GM12878 (cell line): ENCODE measurements at regions of chr12 and their contacts with region 1.

Region 1: GRCh38 chr12:102740141-102740955 is 176.7 kb downstream of the PAH start:
- DNase-seq: no peak
- ATAC-seq: peak; percentile 64
- H3K4me3 ChIP-seq: no peak overlapping the region
- H3K27ac ChIP-seq: no peak overlapping the region
- H3K4me1 ChIP-seq: peaks cover 1% of the 10 kb centered on the region
- H3K27me3 ChIP-seq: no peaks in the 10 kb centered on the region
- CTCF ChIP-seq: peak; percentile 17 to 64 (median 37); a peak in 3 of 6 replicates
- EP300 ChIP-seq: no peak
- POLR2A ChIP-seq: no peak
- RAD21 ChIP-seq: peak; percentile 74

Region 2: GRCh38 chr12:102119674-102120563 is 620.4 kb before region 1 on chr12 and contains the starts of genes NUP37 and PARPBP:
- CTCF ChIA-PET with region 1: interaction called, 10 read pairs
- POLR2A ChIA-PET with region 1: no interaction called
- RAD21 ChIA-PET with region 1: no interaction called
- SMC1A ChIA-PET with region 1: no interaction called
- in situ Hi-C with region 1: no loop called
- intact Hi-C with region 1: no loop called
- DNase-seq: peak; percentile 68
- ATAC-seq: peak; percentile 95
- H3K4me3 ChIP-seq: peak within 1 kb of the TSS; percentile 88
- H3K27ac ChIP-seq: peak within 1 kb of the TSS; percentile 86
- H3K4me1 ChIP-seq: no peaks in the 10 kb centered on the region
- H3K27me3 ChIP-seq: no peaks in the 10 kb centered on the region
- CTCF ChIP-seq: peak in 1 of 3 experiments; percentile 8; a peak in 1 of 6 replicates
- EP300 ChIP-seq: 0 out of 4 replicates have a peak, but pooled peaks of 1 of the 2 experiments have one; percentile 6
- POLR2A ChIP-seq: peak; percentile 95
- RAD21 ChIP-seq: no peak
- polyA plus RNA-seq, gene NUP37: 191 to 250 TPM
- polyA plus RNA-seq, gene PARPBP: 29.2 to 40.3 TPM

Region 3: DNA sequence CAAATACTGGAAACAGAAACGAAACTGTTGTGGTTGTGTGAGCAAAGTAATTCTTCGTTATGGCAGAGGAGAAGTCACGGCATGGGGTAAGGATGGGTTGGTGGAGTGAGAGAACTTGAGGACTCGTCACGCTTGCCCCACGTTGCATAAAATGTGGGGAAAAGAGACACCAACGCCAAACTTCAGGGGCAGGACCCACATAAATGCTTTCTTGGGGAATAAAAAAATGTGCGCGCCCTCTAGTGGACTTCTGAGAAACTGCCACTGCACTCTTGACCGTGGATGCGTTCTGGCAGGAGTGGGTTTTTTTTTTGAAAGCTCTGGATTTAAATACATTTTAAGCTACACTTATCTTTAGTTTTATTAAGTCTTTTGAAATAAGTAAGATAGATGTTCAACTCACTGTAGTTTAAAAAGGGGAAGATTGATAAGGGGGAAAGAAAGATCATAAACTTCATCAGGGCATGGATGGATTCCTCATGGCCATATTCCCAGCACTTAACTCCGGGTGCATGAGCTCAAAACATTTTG is 255.9 kb before region 1 on chr12:
- CTCF ChIA-PET with region 1: interaction called, 34 read pairs
- POLR2A ChIA-PET with region 1: interaction called, 3 read pairs
- RAD21 ChIA-PET with region 1: interaction called, 14 read pairs
- SMC1A ChIA-PET with region 1: interaction called, 20 read pairs
- in situ Hi-C with region 1: no loop called
- intact Hi-C with region 1: no loop called
- DNase-seq: peak; percentile 84
- ATAC-seq: peak; percentile 80
- H3K4me3 ChIP-seq: peak overlapping the region; percentile 48
- H3K27ac ChIP-seq: peak overlapping the region; percentile 100
- H3K4me1 ChIP-seq: peaks cover 54% of the 10 kb centered on the region
- H3K27me3 ChIP-seq: no peaks in the 10 kb centered on the region
- CTCF ChIP-seq: peak; percentile 79 to 91 (median 81)
- EP300 ChIP-seq: peak; percentile 87 to 90; a peak in 3 of 4 replicates
- POLR2A ChIP-seq: peak; percentile 43; the same call in 1 of the 2 replicates
- RAD21 ChIP-seq: peak; percentile 80

Region 4: DNA sequence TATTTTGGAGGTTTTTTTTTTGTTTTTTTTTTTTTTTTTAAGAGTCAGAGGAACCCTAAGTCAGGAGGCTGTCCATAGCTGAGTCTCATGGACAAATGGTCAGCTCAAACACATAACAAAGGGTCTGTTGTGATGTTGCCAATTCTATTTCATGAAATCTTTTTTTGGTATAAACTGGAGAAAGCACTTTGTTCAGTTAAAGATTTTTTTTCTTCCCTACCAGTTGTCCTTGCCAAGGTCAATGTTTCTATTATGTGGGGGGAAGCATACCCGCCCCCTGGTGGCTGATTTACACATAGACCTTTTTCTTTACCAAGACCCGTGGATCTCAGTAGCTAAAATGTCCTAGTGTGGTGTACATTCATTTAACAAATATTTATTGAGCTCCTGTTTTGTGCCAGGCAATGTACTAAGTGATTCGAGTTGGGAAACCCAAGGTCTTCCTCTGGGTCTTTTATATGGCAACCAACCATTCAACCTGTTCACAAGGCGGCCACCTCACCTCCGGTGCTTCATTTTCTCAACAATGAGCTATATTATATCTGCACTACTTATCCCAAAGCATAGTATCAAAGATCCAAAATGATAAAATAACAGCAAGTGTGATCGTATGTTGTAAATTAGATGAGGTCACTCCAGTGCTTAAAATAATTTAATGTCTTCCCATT is 37.8 kb before region 1 on chr12:
- CTCF ChIA-PET with region 1: interaction called, 40 read pairs
- POLR2A ChIA-PET with region 1: no interaction called
- RAD21 ChIA-PET with region 1: interaction called, 24 read pairs
- SMC1A ChIA-PET with region 1: interaction called, 11 read pairs
- in situ Hi-C with region 1: no loop called
- intact Hi-C with region 1: no loop called
- DNase-seq: no peak
- ATAC-seq: peak; percentile 78
- H3K4me3 ChIP-seq: no peak overlapping the region
- H3K27ac ChIP-seq: no peak overlapping the region
- H3K4me1 ChIP-seq: no peaks in the 10 kb centered on the region
- H3K27me3 ChIP-seq: no peaks in the 10 kb centered on the region
- CTCF ChIP-seq: peak; percentile 40 to 54 (median 49)
- EP300 ChIP-seq: no peak
- POLR2A ChIP-seq: no peak
- RAD21 ChIP-seq: peak; percentile 61

Region 5: GRCh38 chr12:102757154-102757881 is 17.0 kb after region 1 on chr12:
- CTCF ChIA-PET with region 1: interaction called, 28 read pairs
- POLR2A ChIA-PET with region 1: no interaction called
- RAD21 ChIA-PET with region 1: interaction called, 19 read pairs
- SMC1A ChIA-PET with region 1: interaction called, 32 read pairs
- in situ Hi-C with region 1: no loop called
- intact Hi-C with region 1: no loop called
- DNase-seq: no peak
- ATAC-seq: no peak
- H3K4me3 ChIP-seq: no peak overlapping the region
- H3K27ac ChIP-seq: no peak overlapping the region
- H3K4me1 ChIP-seq: no peaks in the 10 kb centered on the region
- H3K27me3 ChIP-seq: no peaks in the 10 kb centered on the region
- CTCF ChIP-seq: no peak
- EP300 ChIP-seq: no peak
- POLR2A ChIP-seq: no peak
- RAD21 ChIP-seq: no peak

Region 6: GRCh38 chr12:102776041-102776440 is 35.7 kb after region 1 on chr12:
- CTCF ChIA-PET with region 1: interaction called, 43 read pairs
- POLR2A ChIA-PET with region 1: interaction called, 3 read pairs
- RAD21 ChIA-PET with region 1: interaction called, 6 read pairs
- SMC1A ChIA-PET with region 1: interaction called, 18 read pairs
- in situ Hi-C with region 1: no loop called
- intact Hi-C with region 1: no loop called
- DNase-seq: no peak
- ATAC-seq: peak; percentile 93
- H3K4me3 ChIP-seq: no peak overlapping the region
- H3K27ac ChIP-seq: no peak overlapping the region
- H3K4me1 ChIP-seq: no peaks in the 10 kb centered on the region
- H3K27me3 ChIP-seq: no peaks in the 10 kb centered on the region
- CTCF ChIP-seq: no peak
- EP300 ChIP-seq: peak; percentile 69 to 82; a peak in 3 of 4 replicates
- POLR2A ChIP-seq: no peak
- RAD21 ChIP-seq: no peak

Region 7: DNA sequence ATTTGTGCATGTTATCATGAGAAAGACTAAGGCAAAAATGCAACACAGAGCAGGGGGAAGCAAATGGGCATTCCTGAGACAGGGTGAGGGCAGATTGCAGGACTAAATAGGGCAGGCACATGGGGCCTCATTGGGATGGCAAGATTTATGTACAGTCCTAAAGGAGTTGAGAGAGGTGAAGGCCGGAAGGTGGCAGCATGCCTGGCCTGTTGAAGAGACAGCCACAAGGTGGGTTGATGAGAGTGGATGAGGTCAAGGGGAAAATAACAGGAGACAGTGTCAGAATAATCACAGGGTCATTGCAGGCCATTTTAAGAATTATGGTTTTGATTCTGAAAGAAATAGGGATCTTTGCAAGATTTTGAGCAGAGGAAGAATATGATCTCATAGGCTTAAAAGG is 155.7 kb after region 1 on chr12:
- CTCF ChIA-PET with region 1: no interaction called
- POLR2A ChIA-PET with region 1: no interaction called
- RAD21 ChIA-PET with region 1: no interaction called
- SMC1A ChIA-PET with region 1: no interaction called
- in situ Hi-C with region 1: no loop called
- intact Hi-C with region 1: no loop called
- DNase-seq: no peak
- ATAC-seq: peak; percentile 81
- H3K4me3 ChIP-seq: no peak overlapping the region
- H3K27ac ChIP-seq: no peak overlapping the region
- H3K4me1 ChIP-seq: no peaks in the 10 kb centered on the region
- H3K27me3 ChIP-seq: 0 out of 4 replicates have a peak, but pooled peaks cover 0 to 2% of the 10 kb centered on the region in 2 experiments
- CTCF ChIP-seq: peak in 2 of 3 experiments; percentile 13 to 34; a peak in 2 of 6 replicates
- EP300 ChIP-seq: no peak
- POLR2A ChIP-seq: no peak
- RAD21 ChIP-seq: no peak